Heart right ventricle (tissue), 16 donors: ENCODE measurements at regions of chr18 and their contacts with region 1.

Region 1: GRCh38 chr18:40524881-40525280 is 1430.2 kb upstream of the PIK3C3 start:
- DNase-seq: no peak
- ATAC-seq: no peak
- H3K4me3 ChIP-seq: no peak overlapping the region
- H3K27ac ChIP-seq: no peak overlapping the region
- H3K4me1 ChIP-seq: no peaks in the 10 kb centered on the region
- H3K27me3 ChIP-seq: no peaks in the 10 kb centered on the region
- CTCF ChIP-seq: no peak

Region 2: DNA sequence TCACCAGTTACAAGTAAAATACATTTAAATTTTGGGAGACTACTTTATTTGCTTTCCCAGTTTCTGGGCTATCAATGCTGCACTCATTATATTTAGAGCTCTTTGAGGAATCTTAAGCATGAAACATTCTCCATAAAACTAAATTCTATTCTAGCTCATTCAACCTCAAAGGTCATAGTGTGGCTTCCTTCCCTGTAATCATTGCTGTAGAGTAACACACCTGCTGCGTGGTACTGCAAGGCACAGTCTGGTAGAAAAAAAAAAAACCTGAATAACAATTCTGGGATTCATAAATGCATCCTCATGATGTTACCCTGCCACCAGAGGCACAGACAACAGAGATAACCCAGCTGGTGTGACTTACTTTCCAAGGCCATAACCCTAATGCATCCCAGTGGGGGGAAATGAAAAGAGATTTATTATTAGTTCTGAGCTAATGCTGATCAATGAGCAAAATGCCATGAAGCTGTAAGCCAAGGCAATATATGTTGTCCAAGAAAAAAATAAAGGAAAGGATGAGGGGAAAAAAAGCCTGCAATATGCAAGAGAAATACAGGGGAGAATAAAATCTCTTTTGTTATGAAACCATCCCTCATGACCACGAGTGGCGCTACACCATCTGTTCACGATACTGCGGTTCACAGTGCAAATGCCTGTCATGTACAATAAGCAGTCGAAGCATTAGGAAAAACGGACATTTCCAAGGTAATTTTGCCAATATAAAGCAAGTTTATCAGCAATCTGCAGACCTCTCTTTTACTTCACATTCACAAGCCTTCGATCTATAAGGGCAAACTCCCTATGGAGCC is 51.5 kb before region 1 on chr18:
- intact Hi-C with region 1: loop called in 1 of 10 experiments (anchors 2 kb)
- DNase-seq: no peak
- ATAC-seq: no peak
- H3K4me3 ChIP-seq: no peak overlapping the region
- H3K27ac ChIP-seq: no peak overlapping the region
- H3K4me1 ChIP-seq: no peaks in the 10 kb centered on the region
- H3K27me3 ChIP-seq: no peaks in the 10 kb centered on the region
- CTCF ChIP-seq: no peak

Region 3: GRCh38 chr18:40559556-40559955 is 34.7 kb after region 1 on chr18:
- intact Hi-C with region 1: no loop called
- DNase-seq: no peak
- ATAC-seq: no peak
- H3K4me3 ChIP-seq: no peak overlapping the region
- H3K27ac ChIP-seq: no peak overlapping the region
- H3K4me1 ChIP-seq: no peaks in the 10 kb centered on the region
- H3K27me3 ChIP-seq: no peaks in the 10 kb centered on the region
- CTCF ChIP-seq: no peak

Region 4: GRCh38 chr18:40607542-40608148 is 82.8 kb after region 1 on chr18:
- intact Hi-C with region 1: no loop called
- DNase-seq: no peak
- ATAC-seq: no peak
- H3K4me3 ChIP-seq: no peak overlapping the region
- H3K27ac ChIP-seq: no peak overlapping the region
- H3K4me1 ChIP-seq: no peaks in the 10 kb centered on the region
- H3K27me3 ChIP-seq: no peaks in the 10 kb centered on the region
- CTCF ChIP-seq: no peak